K562 (cell line): ENCODE measurements at regions of chr12 and their contacts with region 1.

Region 1: GRCh38 chr12:62435303-62436163 is 31.1 kb upstream of the MON2 start:
- DNase-seq: peak in 2 of 4 experiments; percentile 35 to 59
- ATAC-seq: peak; percentile 94
- H3K4me3 ChIP-seq: peak overlapping the region; percentile 25
- H3K27ac ChIP-seq: no peak overlapping the region
- H3K4me1 ChIP-seq: peaks cover 0 to 16% of the 10 kb centered on the region in 2 experiments; a peak in 3 of 5 replicates
- H3K27me3 ChIP-seq: peaks cover 0 to 16% of the 10 kb centered on the region in 2 experiments; a peak in 2 of 5 replicates
- CTCF ChIP-seq: peak; percentile 57 to 90 (median 73); a peak in 5 of 6 replicates
- EP300 ChIP-seq: no peak
- POLR2A ChIP-seq: no peak
- RAD21 ChIP-seq: peak in 1 of 2 experiments; percentile 60; a peak in 2 of 4 replicates

Region 2: GRCh38 chr12:62192180-62192902 is 243.2 kb before region 1 on chr12:
- CTCF ChIA-PET with region 1: no interaction called
- POLR2A ChIA-PET with region 1: no interaction called
- in situ Hi-C with region 1: no loop called
- intact Hi-C with region 1: loop called (anchors 5 kb)
- DNase-seq: peak; percentile 50 to 74 (median 62)
- ATAC-seq: peak; percentile 99
- H3K4me3 ChIP-seq: no peak overlapping the region
- H3K27ac ChIP-seq: no peak overlapping the region
- H3K4me1 ChIP-seq: peaks cover 0 to 18% of the 10 kb centered on the region in 2 experiments; a peak in 2 of 5 replicates
- H3K27me3 ChIP-seq: peaks cover 0 to 8% of the 10 kb centered on the region in 2 experiments; a peak in 2 of 5 replicates
- CTCF ChIP-seq: peak; percentile 30 to 83 (median 73); a peak in 5 of 6 replicates
- EP300 ChIP-seq: peak; percentile 10; the same call in 1 of the 2 replicates
- POLR2A ChIP-seq: no peak
- RAD21 ChIP-seq: peak; percentile 81 to 84

Region 3: DNA sequence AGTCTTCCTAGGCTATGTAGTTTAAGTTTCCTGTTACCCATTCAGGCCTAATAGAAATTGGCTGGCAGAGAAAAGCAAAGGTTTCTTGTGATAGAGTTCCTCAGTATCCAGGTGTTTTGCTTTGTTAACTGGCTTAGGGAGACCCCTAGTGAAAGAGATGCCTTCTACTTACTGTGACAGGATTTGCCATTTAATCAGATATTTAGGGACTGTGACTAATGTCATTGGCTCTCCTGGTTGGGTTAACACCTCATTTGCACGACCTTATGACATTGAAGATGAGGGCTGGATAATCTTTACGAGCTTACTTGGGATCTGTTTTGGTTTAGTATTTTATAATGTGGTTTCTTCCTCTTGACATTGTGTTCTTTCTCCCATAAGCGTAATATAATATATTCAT is 36.9 kb after region 1 on chr12:
- CTCF ChIA-PET with region 1: no interaction called
- POLR2A ChIA-PET with region 1: interaction called, 3 read pairs
- in situ Hi-C with region 1: no loop called
- intact Hi-C with region 1: loop called (anchors 2 kb)
- DNase-seq: peak; percentile 13 to 30 (median 18)
- ATAC-seq: peak; percentile 50
- H3K4me3 ChIP-seq: no peak overlapping the region
- H3K27ac ChIP-seq: no peak overlapping the region
- H3K4me1 ChIP-seq: peaks cover 5 to 9% of the 10 kb centered on the region in 2 experiments; a peak in 4 of 5 replicates
- H3K27me3 ChIP-seq: no peaks in the 10 kb centered on the region
- CTCF ChIP-seq: peak in 1 of 3 experiments; percentile 27; a peak in 2 of 6 replicates
- EP300 ChIP-seq: no peak
- POLR2A ChIP-seq: no peak
- RAD21 ChIP-seq: peak in 1 of 2 experiments; percentile 32; a peak in 2 of 4 replicates

Region 4: DNA sequence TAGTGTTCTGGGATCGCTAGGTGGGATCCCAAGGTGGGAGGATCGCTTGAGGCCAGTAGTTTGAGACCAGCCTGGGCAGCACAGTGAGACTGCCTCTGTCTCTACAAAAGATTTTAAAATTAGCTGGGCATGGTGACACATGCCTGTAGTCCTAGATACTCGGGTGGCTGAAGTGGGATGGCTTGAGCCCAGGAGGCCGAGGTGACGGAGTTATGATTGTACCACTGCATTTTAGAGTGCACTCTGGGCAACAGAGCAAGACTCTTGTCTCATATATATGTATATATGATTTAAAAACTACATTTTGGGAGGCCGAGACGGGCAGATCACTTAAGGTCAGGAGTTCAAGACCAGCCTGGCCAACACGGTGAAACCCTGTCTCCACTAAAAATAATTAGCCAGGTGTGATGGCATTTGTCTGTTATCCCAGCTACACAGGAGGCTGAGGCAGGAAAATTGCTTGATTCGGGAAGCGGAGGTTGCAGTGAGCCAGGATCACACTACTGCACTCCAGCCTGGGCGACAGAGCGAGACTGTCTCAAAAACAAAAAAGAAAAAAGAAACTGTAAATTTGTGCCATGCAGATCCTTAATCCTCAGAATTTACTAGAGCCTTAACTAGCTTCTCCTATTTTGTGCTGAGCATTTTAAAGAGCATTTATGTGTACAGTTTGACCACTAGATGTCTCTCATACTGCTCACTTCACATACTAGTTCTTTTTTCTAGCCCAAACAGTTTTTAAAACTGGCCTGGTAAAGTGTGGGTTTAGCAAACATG is 145.9 kb after region 1 on chr12:
- CTCF ChIA-PET with region 1: no interaction called
- POLR2A ChIA-PET with region 1: no interaction called
- in situ Hi-C with region 1: no loop called
- intact Hi-C with region 1: loop called (anchors 5 kb)
- DNase-seq: peak; percentile 15 to 51 (median 27)
- ATAC-seq: peak; percentile 95
- H3K4me3 ChIP-seq: no peak overlapping the region
- H3K27ac ChIP-seq: no peak overlapping the region
- H3K4me1 ChIP-seq: no peaks in the 10 kb centered on the region
- H3K27me3 ChIP-seq: no peaks in the 10 kb centered on the region
- CTCF ChIP-seq: peak; percentile 49 to 72 (median 51); a peak in 5 of 6 replicates
- EP300 ChIP-seq: no peak
- POLR2A ChIP-seq: no peak
- RAD21 ChIP-seq: peak; percentile 81 to 84

Region 5: GRCh38 chr12:62793256-62794217 is 358.0 kb after region 1 on chr12:
- CTCF ChIA-PET with region 1: interaction called, 6 read pairs
- POLR2A ChIA-PET with region 1: no interaction called
- in situ Hi-C with region 1: loop called (anchors 5 kb)
- intact Hi-C with region 1: loop called (anchors 1 kb)
- DNase-seq: peak; percentile 67 to 78 (median 70)
- ATAC-seq: peak; percentile 87
- H3K4me3 ChIP-seq: no peak overlapping the region
- H3K27ac ChIP-seq: no peak overlapping the region
- H3K4me1 ChIP-seq: no peaks in the 10 kb centered on the region
- H3K27me3 ChIP-seq: no peaks in the 10 kb centered on the region
- CTCF ChIP-seq: peak; percentile 80 to 92 (median 86)
- EP300 ChIP-seq: no peak
- POLR2A ChIP-seq: no peak
- RAD21 ChIP-seq: peak; percentile 93 to 95

Region 6: DNA sequence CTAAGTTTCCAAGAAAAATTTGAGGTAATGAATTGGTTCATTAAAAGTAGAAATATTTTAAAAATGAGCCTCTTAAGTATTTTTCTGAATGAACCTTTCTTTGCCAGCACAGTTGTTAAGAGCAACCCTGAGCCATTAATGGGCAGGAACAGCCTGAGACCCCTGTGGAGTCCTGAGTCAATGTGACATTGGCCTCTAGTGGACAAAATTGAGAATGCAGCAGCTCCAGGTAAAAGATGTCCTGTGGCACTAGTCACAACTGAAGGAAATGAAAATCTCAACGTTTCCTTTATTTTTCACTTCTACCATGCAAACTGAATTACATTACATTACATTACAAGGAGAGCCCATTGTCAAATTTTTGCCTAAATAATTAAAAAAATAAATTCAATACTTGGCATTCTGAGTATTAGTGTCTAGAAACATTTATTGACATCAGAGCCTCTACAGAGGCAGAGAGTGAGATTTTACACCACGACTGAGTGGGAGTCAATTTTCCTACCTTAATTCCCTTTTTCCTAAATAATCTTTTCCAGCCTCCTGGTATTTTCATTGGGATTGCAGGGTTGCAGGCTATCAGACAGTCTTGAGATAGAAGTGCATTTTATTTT is 363.7 kb after region 1 on chr12:
- CTCF ChIA-PET with region 1: interaction called, 6 read pairs
- POLR2A ChIA-PET with region 1: no interaction called
- in situ Hi-C with region 1: loop called (anchors 5 kb)
- intact Hi-C with region 1: loop called (anchors 1 kb)
- DNase-seq: peak; percentile 69 to 84 (median 78)
- ATAC-seq: peak; percentile 95
- H3K4me3 ChIP-seq: no peak overlapping the region
- H3K27ac ChIP-seq: no peak overlapping the region
- H3K4me1 ChIP-seq: peaks cover 0 to 7% of the 10 kb centered on the region in 2 experiments; a peak in 1 of 5 replicates
- H3K27me3 ChIP-seq: no peaks in the 10 kb centered on the region
- CTCF ChIP-seq: peak; percentile 79 to 86 (median 84)
- EP300 ChIP-seq: no peak
- POLR2A ChIP-seq: no peak
- RAD21 ChIP-seq: peak; percentile 79 to 82